ENCODE measurements at regions of chr9 and their contacts with region 1.

Region 1: GRCh38 chr9:36328798-36329411 is 70.7 kb upstream of the GNE start:
- H3K4me3 ChIP-seq: no peak overlapping the region
- H3K27ac ChIP-seq: no peak overlapping the region
- H3K4me1 ChIP-seq: no peaks in the 10 kb centered on the region
- CTCF ChIP-seq: peak; percentile 20; the same call in 1 of the 2 replicates

Region 2: DNA sequence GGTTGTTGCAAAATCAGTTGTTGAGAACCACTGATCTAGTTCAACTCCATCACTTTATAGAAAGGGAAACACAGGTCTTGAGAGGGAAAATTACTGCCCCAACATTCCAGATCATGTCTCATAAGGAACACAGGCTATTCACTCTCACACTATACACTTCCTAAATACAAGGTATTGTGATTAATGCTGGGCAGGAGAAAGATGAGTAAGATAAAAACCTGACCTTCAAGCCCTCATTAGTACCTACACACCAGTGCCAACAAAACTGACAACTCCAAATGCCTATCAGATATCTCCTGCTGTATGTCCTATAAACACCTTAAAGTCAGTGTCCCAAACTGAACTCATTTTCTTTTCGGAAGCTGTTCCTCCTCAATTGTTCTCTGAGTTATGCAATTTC is 78.8 kb before region 1 on chr9:
- CTCF ChIA-PET with region 1: interaction called, 97 read pairs
- POLR2A ChIA-PET with region 1: interaction called, 4 read pairs
- H3K4me3 ChIP-seq: no peak overlapping the region
- H3K27ac ChIP-seq: no peak overlapping the region
- H3K4me1 ChIP-seq: no peaks in the 10 kb centered on the region
- CTCF ChIP-seq: no peak

Region 3: DNA sequence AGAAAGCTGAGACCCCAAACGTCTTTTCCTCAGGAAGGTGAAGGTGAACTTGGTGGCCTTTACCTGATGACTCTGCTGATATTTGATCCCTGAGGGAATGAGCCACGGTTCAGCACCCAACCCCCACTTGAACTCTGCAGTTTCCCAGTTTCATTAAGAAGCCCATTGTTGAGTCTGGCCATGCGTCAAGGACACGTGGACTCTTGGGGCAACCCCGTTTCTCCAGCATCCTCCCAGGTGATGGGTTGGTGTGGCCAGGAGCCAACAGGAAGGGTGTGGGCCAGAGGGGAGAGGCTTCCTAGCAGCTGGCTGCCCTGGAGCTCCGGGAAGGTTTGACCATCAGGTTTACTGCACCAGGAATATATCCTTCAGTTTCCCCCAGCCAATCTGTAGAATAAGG is 11.1 kb before region 1 on chr9:
- CTCF ChIA-PET with region 1: interaction called, 42 read pairs
- POLR2A ChIA-PET with region 1: interaction called, 3 read pairs
- H3K4me3 ChIP-seq: no peak overlapping the region
- H3K27ac ChIP-seq: no peak overlapping the region
- H3K4me1 ChIP-seq: peaks cover 5% of the 10 kb centered on the region; the same call in 1 of the 2 replicates
- CTCF ChIP-seq: no peak

Region 4: DNA sequence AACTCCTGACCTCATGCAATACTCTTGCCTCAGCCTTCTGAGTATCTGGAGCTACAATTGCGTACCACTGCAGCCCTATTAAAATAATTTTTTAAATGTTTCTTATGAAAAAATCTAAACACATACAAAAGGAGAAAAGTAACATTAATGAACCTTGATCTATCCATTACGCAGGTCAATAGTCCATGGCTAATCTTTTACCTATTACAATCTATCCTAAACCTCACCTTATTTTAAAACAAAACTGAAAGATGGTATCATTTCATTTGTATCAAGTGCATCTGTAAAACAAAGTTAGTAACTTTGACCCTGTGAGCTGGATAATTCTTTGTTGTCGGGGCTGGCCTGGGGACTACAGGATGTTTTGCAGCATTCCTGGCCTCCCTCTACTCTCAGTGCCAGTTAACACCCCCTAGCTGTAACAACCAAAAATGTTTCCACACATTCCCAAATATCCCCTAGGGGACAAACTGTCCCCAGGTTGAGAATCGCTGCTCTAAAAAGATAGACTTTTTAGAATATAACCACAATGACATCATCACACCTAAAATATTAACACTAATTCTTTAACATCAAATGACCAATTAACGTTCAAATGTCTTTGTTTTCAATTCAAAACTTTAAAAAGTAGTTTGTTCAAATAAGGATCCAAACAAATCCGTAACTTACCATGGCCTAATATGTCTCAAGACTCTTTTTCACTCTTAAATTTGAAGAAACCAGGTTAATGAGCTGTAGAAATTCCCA is 16.4 kb after region 1 on chr9:
- CTCF ChIA-PET with region 1: interaction called, 12 read pairs
- POLR2A ChIA-PET with region 1: interaction called, 3 read pairs
- H3K4me3 ChIP-seq: no peak overlapping the region
- H3K27ac ChIP-seq: no peak overlapping the region
- H3K4me1 ChIP-seq: no peaks in the 10 kb centered on the region
- CTCF ChIP-seq: no peak

Region 5: GRCh38 chr9:36398745-36399144 is 69.8 kb after region 1 on chr9:
- CTCF ChIA-PET with region 1: no interaction called
- POLR2A ChIA-PET with region 1: no interaction called
- H3K4me3 ChIP-seq: peak overlapping the region; percentile 35
- H3K27ac ChIP-seq: no peak overlapping the region
- H3K4me1 ChIP-seq: peaks cover 5% of the 10 kb centered on the region
- CTCF ChIP-seq: no peak

Measured in HEK293 (cell line).